ENCODE measurements at regions of chr12 and their contacts with region 1.

Region 1: DNA sequence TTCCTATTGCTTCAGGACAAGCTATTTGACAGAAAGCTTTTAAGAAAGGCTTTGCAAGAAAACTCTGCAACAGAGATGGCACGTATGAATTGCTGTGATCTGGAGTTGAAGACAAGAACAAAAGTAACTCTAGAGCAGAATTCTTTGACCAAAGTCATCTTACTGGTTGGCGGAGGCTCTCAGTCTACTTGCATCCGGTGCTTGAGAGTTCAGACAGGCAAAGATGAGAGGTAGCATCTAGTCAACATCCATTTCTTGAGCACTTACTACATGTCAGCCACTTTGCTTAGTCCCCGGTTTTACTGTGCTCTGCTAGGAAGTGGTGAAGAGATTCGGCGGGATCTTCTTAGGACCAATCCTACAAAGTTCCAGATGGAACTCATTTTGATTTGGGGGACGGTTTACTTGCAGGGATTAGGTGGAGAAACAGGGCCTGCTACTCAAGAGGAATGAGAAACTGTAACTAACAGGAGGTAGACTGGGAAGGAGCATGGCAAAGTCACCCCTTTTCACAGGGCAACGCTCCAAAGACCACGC is 404 bp upstream of the CCDC91 start:
- H3K4me3 Mint-ChIP-seq: peak overlapping the region; percentile 100
- H3K27ac Mint-ChIP-seq: peak overlapping the region; percentile 100
- H3K4me1 Mint-ChIP-seq: peaks cover 27% of the 10 kb centered on the region
- H3K27me3 Mint-ChIP-seq: no peaks in the 10 kb centered on the region

Region 2: GRCh38 chr12:28172434-28173030 is 17.3 kb before region 1 on chr12:
- intact Hi-C with region 1: no loop called
- H3K4me3 Mint-ChIP-seq: no peak overlapping the region
- H3K27ac Mint-ChIP-seq: no peak overlapping the region
- H3K4me1 Mint-ChIP-seq: peaks cover 5% of the 10 kb centered on the region
- H3K27me3 Mint-ChIP-seq: no peaks in the 10 kb centered on the region

Region 3: GRCh38 chr12:28223025-28223554 is 33.2 kb after region 1 on chr12:
- intact Hi-C with region 1: loop called (anchors 5 kb)
- H3K4me3 Mint-ChIP-seq: no peak overlapping the region
- H3K27ac Mint-ChIP-seq: no peak overlapping the region
- H3K4me1 Mint-ChIP-seq: peaks cover 39% of the 10 kb centered on the region
- H3K27me3 Mint-ChIP-seq: no peaks in the 10 kb centered on the region